ENCODE measurements at regions of chr3 and their contacts with region 1.

Region 1: GRCh38 chr3:183178629-183179549 is 16.4 kb upstream of the LAMP3 start:
- DNase-seq: no peak
- ATAC-seq: peak; percentile 76
- H3K4me3 ChIP-seq: peak overlapping the region; percentile 48
- H3K27ac ChIP-seq: no peak overlapping the region
- H3K4me1 ChIP-seq: no peaks in the 10 kb centered on the region
- H3K27me3 ChIP-seq: peaks cover 46% of the 10 kb centered on the region
- CTCF ChIP-seq: peak; percentile 18; the same call in 1 of the 2 replicates
- POLR2A ChIP-seq: no peak
- RAD21 ChIP-seq: no peak

Region 2: DNA sequence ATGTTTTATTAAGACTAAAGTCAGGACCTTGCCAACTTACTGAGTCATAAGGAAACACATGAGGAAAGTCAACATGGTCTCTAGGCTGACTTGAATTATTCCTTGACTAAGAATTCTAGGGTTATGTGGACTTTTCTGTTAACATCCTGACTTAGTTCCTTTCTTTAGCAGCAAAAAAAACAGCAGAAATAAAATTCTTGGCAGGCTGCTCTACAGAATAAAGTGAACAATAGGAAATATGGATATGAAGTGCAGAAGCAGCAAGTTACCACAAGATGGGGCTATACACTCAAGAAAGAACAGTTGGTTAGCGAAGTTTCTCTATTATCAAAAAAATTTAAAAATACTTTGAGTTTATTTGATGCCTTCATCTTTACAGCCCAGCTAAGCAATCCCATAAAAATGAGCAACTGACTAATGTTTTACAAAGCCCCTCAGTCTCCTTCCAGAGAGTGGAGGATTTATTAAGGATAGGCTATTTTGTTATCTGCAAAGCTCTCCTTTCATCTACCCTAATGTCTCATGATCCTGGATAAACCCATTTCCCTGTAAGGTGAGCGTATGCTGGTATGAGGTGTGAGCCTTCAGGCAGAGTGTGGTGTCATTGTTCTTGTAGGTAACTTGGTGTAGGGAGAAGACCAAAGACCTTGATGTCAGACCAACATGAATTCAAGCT is 56.5 kb before region 1 on chr3:
- CTCF ChIA-PET with region 1: interaction called, 8 read pairs
- POLR2A ChIA-PET with region 1: no interaction called
- dilution Hi-C with region 1: no loop called
- in situ Hi-C with region 1: no loop called
- intact Hi-C with region 1: loop called (anchors 1 kb)
- DNase-seq: peak; percentile 74
- ATAC-seq: peak; percentile 78
- H3K4me3 ChIP-seq: no peak overlapping the region
- H3K27ac ChIP-seq: no peak overlapping the region
- H3K4me1 ChIP-seq: 0 out of 2 replicates have a peak, but pooled peaks cover 2% of the 10 kb centered on the region
- H3K27me3 ChIP-seq: peaks cover 12% of the 10 kb centered on the region
- CTCF ChIP-seq: peak; percentile 93
- POLR2A ChIP-seq: no peak
- RAD21 ChIP-seq: peak; percentile 87

Region 3: DNA sequence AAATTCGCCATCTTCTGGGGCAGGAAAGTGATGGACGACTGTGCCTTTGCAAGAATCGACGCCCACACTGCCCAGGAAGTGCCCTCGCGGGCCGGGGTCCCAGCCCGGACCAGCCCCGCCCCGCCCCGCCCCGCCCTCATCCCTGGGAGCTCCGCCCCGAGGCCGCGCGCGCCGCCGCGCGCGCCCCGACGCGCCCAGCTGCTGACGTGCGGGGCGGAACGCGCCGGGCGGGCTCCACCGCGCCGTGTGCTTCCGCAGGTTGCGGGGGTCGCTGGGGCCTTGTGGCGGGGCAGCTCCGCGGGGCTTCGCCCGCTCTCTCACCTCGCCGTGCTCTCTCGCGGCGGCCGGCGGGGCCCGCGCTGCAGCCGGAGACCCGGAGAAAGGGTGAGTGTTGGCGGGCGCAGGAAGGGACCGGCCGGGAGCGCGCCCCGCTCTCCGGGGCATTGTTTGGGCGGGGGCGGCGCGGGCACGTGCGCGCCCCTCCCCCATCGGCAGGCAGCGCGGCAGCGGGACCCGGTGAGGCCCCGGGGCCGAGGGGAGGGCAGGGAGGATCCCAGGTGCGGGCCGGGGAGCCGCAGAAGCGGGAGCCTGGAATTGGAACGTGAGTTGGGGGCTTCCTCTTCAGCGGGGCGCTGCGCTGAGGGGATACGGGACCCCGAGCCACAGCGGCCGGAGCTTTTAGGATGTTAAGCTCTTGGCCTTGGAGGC is 518.9 kb after region 1 on chr3 and contains the start of gene YEATS2:
- CTCF ChIA-PET with region 1: no interaction called
- POLR2A ChIA-PET with region 1: no interaction called
- dilution Hi-C with region 1: no loop called
- in situ Hi-C with region 1: no loop called
- intact Hi-C with region 1: no loop called
- DNase-seq: peak; percentile 61
- ATAC-seq: peak; percentile 90
- H3K4me3 ChIP-seq: peak within 1 kb of the TSS; percentile 99
- H3K27ac ChIP-seq: peak within 1 kb of the TSS; percentile 96
- H3K4me1 ChIP-seq: peaks cover 2% of the 10 kb centered on the region
- H3K27me3 ChIP-seq: no peaks in the 10 kb centered on the region
- CTCF ChIP-seq: no peak
- POLR2A ChIP-seq: peak; percentile 75; the same call in 1 of the 2 replicates
- RAD21 ChIP-seq: no peak
- total RNA-seq, gene YEATS2: 43.0 and 45.0 TPM in 2 replicates